B cell (primary cell): ENCODE measurements at regions of chr1 and their contacts with region 1.

Region 1: GRCh38 chr1:153958111-153958960 is at the start of gene CRTC2:
- DNase-seq: peak; percentile 97
- ATAC-seq: peak; percentile 85
- H3K4me3 ChIP-seq: peak within 1 kb of the TSS; percentile 79 to 98 (median 92)
- H3K4me3 Mint-ChIP-seq: peak within 1 kb of the TSS; percentile 100
- H3K27ac ChIP-seq: peak within 1 kb of the TSS; percentile 87 to 97
- H3K27ac Mint-ChIP-seq: peak within 1 kb of the TSS; percentile 97
- H3K4me1 ChIP-seq: peaks cover 44 to 47% of the 10 kb centered on the region in 2 donors
- H3K4me1 Mint-ChIP-seq: peaks cover 67% of the 10 kb centered on the region
- H3K27me3 ChIP-seq: no peaks in the 10 kb centered on the region
- H3K27me3 Mint-ChIP-seq: no peaks in the 10 kb centered on the region
- CTCF ChIP-seq: no peak
- total RNA-seq, gene CRTC2: 153 and 157 TPM in 2 replicates

Region 2: DNA sequence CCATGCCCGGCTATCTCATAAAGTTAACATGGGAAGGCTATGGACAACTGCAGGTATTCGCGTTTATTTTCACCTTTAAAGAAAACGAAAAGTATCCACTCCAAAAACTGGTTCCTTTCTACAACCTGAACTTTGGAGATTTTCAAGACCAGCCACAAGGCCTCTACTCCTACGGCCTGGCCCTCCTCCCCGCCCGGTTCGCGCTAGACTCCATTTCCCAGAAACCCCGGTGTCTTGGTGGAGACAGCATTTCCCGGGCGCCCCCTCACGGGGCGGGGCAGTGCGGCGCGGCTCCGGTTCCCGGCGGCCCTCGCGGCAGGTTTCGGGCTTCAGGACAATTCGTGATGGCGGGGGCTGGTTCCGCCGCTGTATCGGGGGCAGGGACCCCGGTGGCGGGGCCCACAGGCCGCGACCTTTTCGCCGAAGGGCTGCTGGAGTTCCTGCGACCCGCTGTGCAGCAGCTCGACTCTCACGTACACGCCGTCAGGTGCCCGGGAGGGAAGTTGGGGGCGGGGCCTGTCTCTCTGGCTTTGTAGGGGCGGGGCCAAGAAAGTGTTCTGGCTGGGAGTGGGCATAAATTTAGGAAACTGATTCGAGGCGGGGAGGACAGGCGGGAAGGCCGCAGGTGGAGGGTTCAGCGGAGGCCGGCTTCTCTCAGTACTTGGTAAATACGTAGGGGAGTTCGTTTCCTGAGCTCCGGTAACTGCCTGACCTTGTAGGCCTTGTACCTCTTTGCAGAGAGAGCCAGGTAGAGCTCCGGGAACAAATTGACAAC is 299.7 kb before region 1 on chr1 and contains the start of gene SNAPIN:
- CTCF ChIA-PET with region 1: no interaction called
- POLR2A ChIA-PET with region 1: no interaction called
- intact Hi-C with region 1: loop called (anchors 1 kb)
- DNase-seq: peak; percentile 93
- ATAC-seq: peak; percentile 99
- H3K4me3 ChIP-seq: peak within 1 kb of the TSS; percentile 77 to 87 (median 82)
- H3K4me3 Mint-ChIP-seq: peak within 1 kb of the TSS; percentile 96
- H3K27ac ChIP-seq: peak within 1 kb of the TSS; percentile 68 to 83
- H3K27ac Mint-ChIP-seq: peak within 1 kb of the TSS; percentile 91
- H3K4me1 ChIP-seq: peaks cover 5 to 15% of the 10 kb centered on the region in 2 donors
- H3K4me1 Mint-ChIP-seq: peaks cover 12% of the 10 kb centered on the region
- H3K27me3 ChIP-seq: no peaks in the 10 kb centered on the region
- H3K27me3 Mint-ChIP-seq: no peaks in the 10 kb centered on the region
- CTCF ChIP-seq: no peak
- total RNA-seq, gene SNAPIN: 37.6 and 39.4 TPM in 2 replicates

Region 3: DNA sequence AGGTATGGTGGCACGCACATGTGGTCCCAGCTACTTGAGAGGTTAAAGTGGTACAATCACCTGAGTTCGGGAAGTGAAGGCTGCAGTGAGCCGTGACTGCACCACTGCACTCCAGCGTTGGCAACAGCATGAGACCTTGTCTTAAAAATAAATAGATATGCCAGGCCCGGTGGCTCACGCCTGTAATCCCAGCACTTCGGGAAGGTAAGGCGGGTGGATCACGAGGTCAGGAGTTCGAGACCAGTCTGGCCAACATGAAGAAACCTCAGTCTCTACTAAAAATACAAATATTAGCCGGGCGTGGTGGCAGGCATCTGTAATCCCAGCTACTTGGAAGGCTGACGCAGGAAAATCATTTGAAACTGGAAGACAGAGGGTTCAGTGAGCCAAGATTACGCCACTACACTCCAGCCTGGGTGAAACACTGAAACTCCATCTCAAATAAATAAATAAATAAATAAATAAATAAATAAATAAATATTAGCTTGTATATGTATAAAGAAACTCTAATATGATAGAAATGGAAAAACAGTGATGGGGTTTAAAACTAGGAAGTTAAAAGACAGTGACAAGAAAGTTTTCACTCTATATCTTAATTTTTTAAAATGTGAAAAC is 54.4 kb before region 1 on chr1:
- CTCF ChIA-PET with region 1: no interaction called
- POLR2A ChIA-PET with region 1: interaction called, 10 read pairs
- intact Hi-C with region 1: no loop called
- DNase-seq: no peak
- ATAC-seq: no peak
- H3K4me3 ChIP-seq: no peak overlapping the region
- H3K4me3 Mint-ChIP-seq: no peak overlapping the region
- H3K27ac ChIP-seq: no peak overlapping the region
- H3K27ac Mint-ChIP-seq: no peak overlapping the region
- H3K4me1 ChIP-seq: peaks cover 0 to 11% of the 10 kb centered on the region in 2 donors
- H3K4me1 Mint-ChIP-seq: peaks cover 18% of the 10 kb centered on the region
- H3K27me3 ChIP-seq: no peaks in the 10 kb centered on the region
- H3K27me3 Mint-ChIP-seq: no peaks in the 10 kb centered on the region
- CTCF ChIP-seq: no peak

Region 4: DNA sequence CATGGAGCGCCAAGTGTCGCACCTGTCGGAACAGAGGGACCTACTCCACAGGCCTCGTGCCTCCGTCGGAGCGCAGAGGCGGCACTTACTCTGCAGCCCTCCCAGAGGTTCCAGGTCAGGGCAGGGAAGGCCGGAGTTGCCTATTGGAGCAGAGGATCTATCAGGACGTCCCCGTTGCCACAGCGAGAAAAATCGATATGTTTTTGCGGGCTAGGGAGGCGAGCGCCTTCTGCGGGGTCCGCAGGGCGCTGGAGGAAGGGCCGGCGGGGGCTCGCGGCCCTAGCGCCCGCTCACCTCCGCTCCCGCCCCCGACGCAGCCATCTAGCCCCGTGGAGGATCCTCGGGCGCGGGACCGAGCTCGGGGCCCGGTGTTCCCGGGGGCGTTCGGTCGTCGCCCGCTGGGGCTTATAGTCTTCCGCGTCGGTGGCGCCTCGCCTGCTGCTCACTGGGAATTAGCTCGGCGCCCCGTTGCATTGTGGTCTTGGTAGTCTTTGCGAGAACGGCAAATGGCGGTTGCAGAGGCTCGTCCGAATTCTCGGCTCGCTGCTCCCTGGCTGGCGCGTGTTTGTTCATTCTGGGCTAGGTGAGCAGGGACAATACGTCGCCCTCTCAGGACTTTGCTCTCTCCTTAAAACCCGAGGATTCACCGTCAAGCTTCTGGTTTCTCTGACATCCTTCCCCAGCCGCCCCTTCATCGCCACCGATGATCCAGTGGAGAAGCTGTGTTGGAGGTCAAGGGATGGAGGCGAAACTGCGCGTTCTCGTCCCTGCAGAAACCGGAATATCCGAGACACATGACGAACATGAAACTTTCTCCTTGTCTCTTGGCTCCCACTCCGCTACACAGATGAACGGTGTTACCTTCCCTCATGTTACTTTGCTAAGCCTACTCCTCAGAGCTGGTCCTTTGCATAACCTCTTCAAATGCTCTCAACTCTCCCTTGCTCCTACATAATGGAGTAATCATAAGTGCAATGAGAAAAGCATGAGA is 19.2 kb after region 1 on chr1 and contains the start of gene JTB:
- CTCF ChIA-PET with region 1: interaction called, 5 read pairs
- POLR2A ChIA-PET with region 1: interaction called, 18 read pairs
- intact Hi-C with region 1: loop called (anchors 1 kb)
- DNase-seq: peak; percentile 87
- ATAC-seq: peak; percentile 96
- H3K4me3 ChIP-seq: peak within 1 kb of the TSS; percentile 59 to 96 (median 90)
- H3K4me3 Mint-ChIP-seq: peak within 1 kb of the TSS; percentile 98
- H3K27ac ChIP-seq: peak within 1 kb of the TSS; percentile 55 to 87
- H3K27ac Mint-ChIP-seq: peak within 1 kb of the TSS; percentile 96
- H3K4me1 ChIP-seq: peaks cover 16 to 22% of the 10 kb centered on the region in 2 donors
- H3K4me1 Mint-ChIP-seq: peaks cover 34% of the 10 kb centered on the region
- H3K27me3 ChIP-seq: no peaks in the 10 kb centered on the region
- H3K27me3 Mint-ChIP-seq: no peaks in the 10 kb centered on the region
- CTCF ChIP-seq: no peak
- total RNA-seq, gene JTB: 99.1 and 106 TPM in 2 replicates